CD4-positive, alpha-beta T cell (primary cell): ENCODE measurements at regions of chr3 and their contacts with region 1.

Region 1: GRCh38 chr3:141231101-141231935 is at the start of gene PXYLP1:
- DNase-seq: peak; percentile 80 to 94 (median 89)
- ATAC-seq: peak; percentile 89
- H3K4me3 ChIP-seq: peak within 1 kb of the TSS; percentile 88
- H3K4me3 Mint-ChIP-seq: peak within 1 kb of the TSS; percentile 96
- H3K27ac ChIP-seq: peak within 1 kb of the TSS; percentile 76 to 86
- H3K27ac Mint-ChIP-seq: peak within 1 kb of the TSS; percentile 96
- H3K4me1 ChIP-seq: peaks cover 51% of the 10 kb centered on the region
- H3K4me1 Mint-ChIP-seq: peaks cover 66% of the 10 kb centered on the region
- H3K27me3 ChIP-seq: no peaks in the 10 kb centered on the region
- H3K27me3 Mint-ChIP-seq: no peaks in the 10 kb centered on the region
- CTCF ChIP-seq: peak; percentile 38
- total RNA-seq, gene PXYLP1: 21.2 to 22.6 TPM

Region 2: GRCh38 chr3:140051019-140051957 is 1180.0 kb before region 1 on chr3:
- CTCF ChIA-PET with region 1: no interaction called
- POLR2A ChIA-PET with region 1: no interaction called
- intact Hi-C with region 1: no loop called
- DNase-seq: no peak
- ATAC-seq: no peak
- H3K4me3 ChIP-seq: no peak overlapping the region
- H3K4me3 Mint-ChIP-seq: no peak overlapping the region
- H3K27ac ChIP-seq: no peak overlapping the region
- H3K27ac Mint-ChIP-seq: no peak overlapping the region
- H3K4me1 ChIP-seq: no peaks in the 10 kb centered on the region
- H3K4me1 Mint-ChIP-seq: no peaks in the 10 kb centered on the region
- H3K27me3 ChIP-seq: no peaks in the 10 kb centered on the region
- H3K27me3 Mint-ChIP-seq: peaks cover 22% of the 10 kb centered on the region
- CTCF ChIP-seq: no peak

Region 3: DNA sequence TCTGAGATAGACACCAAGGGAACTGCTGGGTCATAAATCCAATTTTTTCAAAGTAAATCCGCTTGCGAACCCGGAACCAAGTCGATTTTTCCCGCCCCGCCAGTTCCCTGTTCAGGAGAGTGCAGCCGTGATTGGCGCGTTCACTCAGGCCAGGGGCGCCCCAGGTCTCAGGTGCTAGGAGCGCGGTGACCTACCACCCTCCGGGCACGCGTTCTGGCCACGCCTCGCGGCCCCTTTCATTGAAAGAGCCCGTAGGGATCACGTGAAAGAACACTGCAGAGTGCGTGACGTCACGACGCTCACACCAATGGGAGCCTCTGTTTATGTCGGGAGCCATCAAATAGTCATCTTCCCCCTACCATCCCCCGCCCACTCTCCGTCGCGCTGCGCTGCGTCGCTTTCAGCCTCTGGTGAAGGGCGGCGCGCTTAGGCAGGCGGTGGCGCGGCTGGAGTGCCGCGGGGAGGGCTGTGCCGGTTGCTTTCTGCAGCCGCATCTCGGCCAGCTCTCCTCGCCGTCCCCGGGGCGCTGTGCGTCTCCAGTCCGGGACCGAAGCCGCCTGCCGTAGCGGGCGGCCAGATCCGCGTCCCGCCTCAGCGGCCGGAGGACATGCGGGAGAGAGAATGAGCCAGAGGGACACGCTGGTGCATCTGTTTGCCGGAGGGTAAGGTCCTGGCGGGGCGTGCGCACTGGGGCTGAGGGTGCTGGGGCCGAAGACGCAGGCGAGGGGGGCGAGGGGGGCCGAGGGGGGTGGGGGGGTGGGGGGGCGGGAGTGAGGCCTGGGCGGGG is 289.7 kb before region 1 on chr3 and contains the start of gene SLC25A36:
- CTCF ChIA-PET with region 1: interaction called, 6 read pairs
- POLR2A ChIA-PET with region 1: interaction called, 11 read pairs
- intact Hi-C with region 1: loop called in 1 of 2 experiments (anchors 5 kb)
- DNase-seq: peak; percentile 87 to 99 (median 94)
- ATAC-seq: peak; percentile 96
- H3K4me3 ChIP-seq: peak within 1 kb of the TSS; percentile 71
- H3K4me3 Mint-ChIP-seq: peak within 1 kb of the TSS; percentile 94
- H3K27ac ChIP-seq: peak within 1 kb of the TSS; percentile 71 to 78
- H3K27ac Mint-ChIP-seq: peak within 1 kb of the TSS; percentile 100
- H3K4me1 ChIP-seq: peaks cover 9% of the 10 kb centered on the region
- H3K4me1 Mint-ChIP-seq: peaks cover 42% of the 10 kb centered on the region
- H3K27me3 ChIP-seq: no peaks in the 10 kb centered on the region
- H3K27me3 Mint-ChIP-seq: no peaks in the 10 kb centered on the region
- CTCF ChIP-seq: no peak
- total RNA-seq, gene SLC25A36: 166 to 171 TPM

Region 4: GRCh38 chr3:141152801-141153678 is 78.3 kb before region 1 on chr3:
- CTCF ChIA-PET with region 1: no interaction called
- POLR2A ChIA-PET with region 1: no interaction called
- intact Hi-C with region 1: no loop called
- DNase-seq: no peak
- ATAC-seq: no peak
- H3K4me3 ChIP-seq: no peak overlapping the region
- H3K4me3 Mint-ChIP-seq: no peak overlapping the region
- H3K27ac ChIP-seq: no peak overlapping the region
- H3K27ac Mint-ChIP-seq: no peak overlapping the region
- H3K4me1 ChIP-seq: no peaks in the 10 kb centered on the region
- H3K4me1 Mint-ChIP-seq: no peaks in the 10 kb centered on the region
- H3K27me3 ChIP-seq: peaks cover 0 to 2% of the 10 kb centered on the region in 2 experiments
- H3K27me3 Mint-ChIP-seq: peaks cover 5% of the 10 kb centered on the region
- CTCF ChIP-seq: no peak

Region 5: DNA sequence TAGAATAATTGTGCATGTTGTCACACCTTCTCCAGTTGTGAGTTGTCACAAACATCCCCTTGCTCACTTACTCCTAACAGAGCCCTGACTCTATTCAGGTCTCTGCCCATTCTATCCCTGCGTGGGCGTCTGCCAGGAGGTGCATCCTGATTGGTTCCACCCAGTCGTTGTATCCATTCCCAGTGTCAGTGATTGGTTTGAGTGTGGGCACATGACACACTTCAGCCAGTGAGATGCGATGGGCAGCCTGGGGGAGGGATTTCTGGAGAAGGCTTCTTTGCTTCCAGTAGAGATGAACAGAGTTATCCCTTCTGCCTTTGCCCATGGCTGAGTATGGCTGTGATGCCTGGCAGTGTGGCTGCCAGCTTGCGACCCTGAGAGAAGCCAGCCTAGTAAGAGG is 19.0 kb after region 1 on chr3:
- CTCF ChIA-PET with region 1: interaction called, 44 read pairs
- POLR2A ChIA-PET with region 1: interaction called, 64 read pairs
- intact Hi-C with region 1: loop called in 1 of 2 experiments (anchors 1 kb)
- DNase-seq: no peak
- ATAC-seq: no peak
- H3K4me3 ChIP-seq: no peak overlapping the region
- H3K4me3 Mint-ChIP-seq: no peak overlapping the region
- H3K27ac ChIP-seq: no peak overlapping the region
- H3K27ac Mint-ChIP-seq: no peak overlapping the region
- H3K4me1 ChIP-seq: no peaks in the 10 kb centered on the region
- H3K4me1 Mint-ChIP-seq: peaks cover 26% of the 10 kb centered on the region
- H3K27me3 ChIP-seq: no peaks in the 10 kb centered on the region
- H3K27me3 Mint-ChIP-seq: no peaks in the 10 kb centered on the region
- CTCF ChIP-seq: no peak

Region 6: GRCh38 chr3:141266797-141267555 is 35.7 kb after region 1 on chr3:
- CTCF ChIA-PET with region 1: interaction called, 24 read pairs
- POLR2A ChIA-PET with region 1: interaction called, 320 read pairs
- intact Hi-C with region 1: no loop called
- DNase-seq: peak in 13 of 14 experiments; percentile 7 to 71 (median 51)
- ATAC-seq: peak; percentile 81
- H3K4me3 ChIP-seq: peak overlapping the region; percentile 64
- H3K4me3 Mint-ChIP-seq: peak overlapping the region; percentile 90
- H3K27ac ChIP-seq: peak overlapping the region; percentile 72 to 84
- H3K27ac Mint-ChIP-seq: peak overlapping the region; percentile 96
- H3K4me1 ChIP-seq: peaks cover 35% of the 10 kb centered on the region
- H3K4me1 Mint-ChIP-seq: peaks cover 49% of the 10 kb centered on the region
- H3K27me3 ChIP-seq: no peaks in the 10 kb centered on the region
- H3K27me3 Mint-ChIP-seq: no peaks in the 10 kb centered on the region
- CTCF ChIP-seq: no peak

Region 7: DNA sequence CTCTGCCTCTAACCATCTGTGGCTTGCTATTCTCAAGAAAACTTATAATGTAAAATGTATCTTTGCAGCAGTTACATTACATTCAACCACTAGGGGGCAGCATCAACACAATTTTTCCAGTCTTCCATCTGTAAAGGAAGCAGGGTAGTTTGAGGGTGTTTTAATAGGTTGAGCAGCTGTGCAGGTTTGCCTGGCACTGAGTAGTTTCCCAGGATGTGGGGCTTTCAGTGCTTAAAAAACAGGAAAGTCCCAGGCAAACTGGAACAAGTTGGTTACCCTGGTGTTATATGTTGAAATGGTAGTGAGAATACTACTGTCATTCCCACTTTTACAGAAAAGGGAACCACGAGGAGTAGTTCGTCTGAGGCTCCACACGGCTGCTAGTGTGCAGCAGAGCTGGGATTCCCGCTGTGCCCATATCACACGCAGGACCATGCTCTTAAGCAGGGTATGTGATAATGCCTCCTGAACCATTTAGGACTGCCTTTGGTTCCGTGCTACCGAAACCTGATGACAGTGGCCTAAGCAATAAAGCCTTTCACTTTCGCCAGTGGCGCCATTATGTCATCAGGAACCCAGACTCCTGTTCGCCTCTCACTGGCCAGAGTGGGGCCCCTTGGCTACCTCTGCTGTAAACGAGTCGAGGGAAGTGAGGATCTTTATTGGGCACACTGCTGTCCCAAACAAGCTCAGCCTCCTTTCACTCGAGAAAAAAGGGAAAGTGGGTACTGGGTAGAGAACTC is 72.3 kb after region 1 on chr3:
- CTCF ChIA-PET with region 1: interaction called, 12 read pairs
- POLR2A ChIA-PET with region 1: interaction called, 46 read pairs
- intact Hi-C with region 1: loop called in 1 of 2 experiments (anchors 10 kb)
- DNase-seq: peak in 11 of 14 experiments; percentile 16 to 89 (median 60)
- ATAC-seq: peak; percentile 43
- H3K4me3 ChIP-seq: no peak overlapping the region
- H3K4me3 Mint-ChIP-seq: no peak overlapping the region
- H3K27ac ChIP-seq: no peak overlapping the region
- H3K27ac Mint-ChIP-seq: no peak overlapping the region
- H3K4me1 ChIP-seq: peaks cover 61% of the 10 kb centered on the region
- H3K4me1 Mint-ChIP-seq: peaks cover 81% of the 10 kb centered on the region
- H3K27me3 ChIP-seq: no peaks in the 10 kb centered on the region
- H3K27me3 Mint-ChIP-seq: no peaks in the 10 kb centered on the region
- CTCF ChIP-seq: peak; percentile 80

Region 8: DNA sequence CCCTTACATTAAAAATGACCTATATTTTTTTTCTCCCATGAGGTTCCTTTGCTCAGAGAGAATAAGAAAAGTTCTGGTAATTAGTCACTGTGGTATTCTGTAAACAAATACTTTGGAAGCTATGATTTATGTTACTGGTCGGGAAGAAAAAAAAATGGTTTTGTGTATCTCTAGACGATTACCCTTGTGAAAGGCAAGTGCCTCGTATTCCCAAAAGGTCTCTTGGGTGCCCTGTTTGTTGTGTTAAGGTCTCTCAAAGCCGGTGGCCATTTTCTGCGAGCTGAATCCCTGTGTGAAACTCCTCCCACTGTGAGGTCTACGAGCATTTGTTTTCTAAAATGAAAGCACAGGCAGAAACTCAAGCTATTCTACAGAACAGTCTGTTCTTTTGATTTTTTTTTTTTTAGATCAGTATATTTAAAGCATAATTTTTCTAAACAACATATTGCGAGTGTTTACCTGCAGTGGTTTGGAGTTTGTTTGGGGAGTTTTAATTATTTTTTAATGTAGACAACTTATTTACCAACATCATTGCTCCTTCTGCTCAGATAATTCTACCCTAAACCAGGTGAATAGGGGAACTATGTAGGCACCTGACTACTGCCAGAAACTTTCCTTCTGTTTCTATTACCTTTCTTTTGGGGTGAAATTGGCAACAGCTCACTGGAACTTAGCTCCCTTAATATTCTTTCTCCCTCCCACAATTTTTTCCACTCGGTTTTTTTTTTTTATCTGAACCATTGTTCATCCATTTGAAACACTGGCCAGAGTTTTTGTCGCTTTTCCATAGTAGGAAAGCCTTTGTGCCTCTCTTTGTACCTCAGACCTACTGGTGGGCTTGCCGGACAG is 181.0 kb after region 1 on chr3:
- CTCF ChIA-PET with region 1: no interaction called
- POLR2A ChIA-PET with region 1: interaction called, 26 read pairs
- intact Hi-C with region 1: no loop called
- DNase-seq: peak; percentile 33 to 87 (median 48)
- ATAC-seq: peak; percentile 69
- H3K4me3 ChIP-seq: peak overlapping the region; percentile 31
- H3K4me3 Mint-ChIP-seq: peak overlapping the region; percentile 82
- H3K27ac ChIP-seq: peak overlapping the region; percentile 65 to 87
- H3K27ac Mint-ChIP-seq: peak overlapping the region; percentile 98
- H3K4me1 ChIP-seq: peaks cover 67% of the 10 kb centered on the region
- H3K4me1 Mint-ChIP-seq: peaks cover 80% of the 10 kb centered on the region
- H3K27me3 ChIP-seq: no peaks in the 10 kb centered on the region
- H3K27me3 Mint-ChIP-seq: no peaks in the 10 kb centered on the region
- CTCF ChIP-seq: no peak

Region 9: GRCh38 chr3:141544697-141545096 is 313.4 kb after region 1 on chr3:
- CTCF ChIA-PET with region 1: no interaction called
- POLR2A ChIA-PET with region 1: no interaction called
- intact Hi-C with region 1: no loop called
- DNase-seq: peak in 4 of 14 experiments; percentile 8 to 84 (median 70)
- ATAC-seq: peak; percentile 91
- H3K4me3 ChIP-seq: peak overlapping the region; percentile 17
- H3K4me3 Mint-ChIP-seq: peak overlapping the region; percentile 74
- H3K27ac ChIP-seq: peak overlapping the region; percentile 40
- H3K27ac Mint-ChIP-seq: peak overlapping the region; percentile 82
- H3K4me1 ChIP-seq: no peaks in the 10 kb centered on the region
- H3K4me1 Mint-ChIP-seq: peaks cover 89% of the 10 kb centered on the region
- H3K27me3 ChIP-seq: no peaks in the 10 kb centered on the region
- H3K27me3 Mint-ChIP-seq: no peaks in the 10 kb centered on the region
- CTCF ChIP-seq: no peak

Region 10: DNA sequence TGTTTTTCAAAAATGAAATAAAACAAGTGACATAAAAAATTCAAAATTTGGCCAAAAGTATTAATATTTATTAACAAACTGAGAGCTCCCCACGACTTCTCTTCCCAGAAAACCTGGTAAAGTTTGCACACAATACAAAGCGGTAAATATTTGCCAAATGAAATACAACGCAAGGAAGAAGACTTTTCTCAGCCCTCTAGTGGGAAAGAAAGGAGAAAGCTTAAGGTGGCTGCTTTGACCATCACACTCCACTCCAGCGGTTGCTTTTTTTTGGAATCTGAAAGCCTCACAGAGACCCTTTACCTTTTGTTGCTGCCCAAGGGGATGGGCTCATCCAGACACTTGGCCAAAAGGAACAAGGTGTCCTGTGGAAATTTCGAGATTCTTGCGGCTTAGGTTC is 995.2 kb after region 1 on chr3:
- CTCF ChIA-PET with region 1: interaction called, 3 read pairs
- POLR2A ChIA-PET with region 1: no interaction called
- intact Hi-C with region 1: loop called in 1 of 2 experiments (anchors 5 kb)
- DNase-seq: peak in 1 of 14 experiments; percentile 10
- ATAC-seq: no peak
- H3K4me3 ChIP-seq: no peak overlapping the region
- H3K4me3 Mint-ChIP-seq: peak overlapping the region; percentile 95
- H3K27ac ChIP-seq: no peak overlapping the region
- H3K27ac Mint-ChIP-seq: no peak overlapping the region
- H3K4me1 ChIP-seq: peaks cover 10% of the 10 kb centered on the region
- H3K4me1 Mint-ChIP-seq: peaks cover 22% of the 10 kb centered on the region
- H3K27me3 ChIP-seq: no peaks in the 10 kb centered on the region
- H3K27me3 Mint-ChIP-seq: no peaks in the 10 kb centered on the region
- CTCF ChIP-seq: no peak